Heart left ventricle (tissue), 16 donors: ENCODE measurements at regions of chr10 and their contacts with region 1.

Region 1: DNA sequence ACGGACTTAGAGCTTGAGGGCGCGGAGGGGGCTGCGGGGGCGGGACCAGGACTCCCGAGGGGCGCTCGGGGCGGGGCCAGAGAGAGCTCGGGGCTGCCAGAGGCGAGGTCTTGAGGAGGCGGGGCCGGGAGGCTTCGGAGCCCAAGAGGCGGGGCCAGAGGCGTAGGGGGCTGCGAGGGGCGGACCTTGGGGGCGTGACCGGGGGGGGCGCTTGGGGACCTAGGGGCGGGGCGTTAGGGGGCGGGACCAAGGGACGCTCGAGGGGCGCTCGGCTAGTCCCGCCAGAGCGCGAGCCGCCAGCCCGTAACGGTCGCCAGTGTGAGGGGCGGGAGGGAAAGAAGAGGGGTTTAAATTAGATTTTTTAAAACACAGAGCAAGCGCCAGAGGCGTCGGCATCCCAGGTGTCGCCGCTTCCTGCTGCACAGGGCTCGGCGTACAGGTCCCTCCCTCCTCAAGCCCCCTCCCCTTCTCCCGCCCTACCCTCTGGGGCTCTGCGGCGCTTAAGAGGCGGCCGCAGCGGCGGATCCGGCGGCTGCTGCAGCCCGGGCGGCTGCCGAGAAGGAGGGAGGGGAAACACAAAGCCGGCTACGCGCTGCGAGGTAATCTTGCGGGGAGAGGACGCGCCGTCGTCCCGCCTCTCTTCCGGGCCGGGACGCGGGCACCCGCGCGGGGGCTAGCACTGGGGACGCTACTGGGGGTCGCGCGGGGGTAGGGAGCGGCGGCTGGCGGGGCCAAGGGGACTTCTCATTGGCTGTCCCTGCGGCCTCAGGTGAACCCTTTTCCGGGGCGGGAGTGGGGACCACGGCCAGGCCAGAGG is at the start of gene ADD3:
- DNase-seq: peak; percentile 96 to 99 (median 98)
- ATAC-seq: peak; percentile 91 to 94 (median 92)
- H3K4me3 ChIP-seq: peak within 1 kb of the TSS; percentile 72 to 98 (median 94)
- H3K27ac ChIP-seq: peak within 1 kb of the TSS; percentile 83 to 99 (median 97)
- H3K4me1 ChIP-seq: peaks cover 0 to 72% (median 43%) of the 10 kb centered on the region in 12 donors
- H3K27me3 ChIP-seq: no peaks in the 10 kb centered on the region
- CTCF ChIP-seq: no peak
- POLR2A ChIP-seq: peak in 1 of 2 donors; percentile 79
- total RNA-seq, gene ADD3: 47.9 to 659 (median 103) TPM

Region 2: GRCh38 chr10:109861081-109861480 is 146.8 kb before region 1 on chr10:
- intact Hi-C with region 1: no loop called
- DNase-seq: no peak
- ATAC-seq: no peak
- H3K4me3 ChIP-seq: no peak overlapping the region
- H3K27ac ChIP-seq: no peak overlapping the region
- H3K4me1 ChIP-seq: peaks cover 0 to under 1% (median 0%) of the 10 kb centered on the region in 12 donors
- H3K27me3 ChIP-seq: no peaks in the 10 kb centered on the region
- CTCF ChIP-seq: no peak
- POLR2A ChIP-seq: no peak

Region 3: GRCh38 chr10:109883859-109884771 is 123.8 kb before region 1 on chr10:
- intact Hi-C with region 1: loop called in 4 of 10 experiments (anchors 2 to 10 kb)
- DNase-seq: peak; percentile 68 to 76 (median 72)
- ATAC-seq: peak; percentile 77 to 82 (median 80)
- H3K4me3 ChIP-seq: peak overlapping the region in 6 of 12 donors; percentile 14 to 40 (median 26)
- H3K27ac ChIP-seq: peak overlapping the region in 11 of 12 donors; percentile 11 to 71 (median 49)
- H3K4me1 ChIP-seq: peaks cover 0 to 35% (median 15%) of the 10 kb centered on the region in 12 donors
- H3K27me3 ChIP-seq: no peaks in the 10 kb centered on the region
- CTCF ChIP-seq: peak; percentile 90 to 98 (median 96)
- POLR2A ChIP-seq: no peak

Region 4: DNA sequence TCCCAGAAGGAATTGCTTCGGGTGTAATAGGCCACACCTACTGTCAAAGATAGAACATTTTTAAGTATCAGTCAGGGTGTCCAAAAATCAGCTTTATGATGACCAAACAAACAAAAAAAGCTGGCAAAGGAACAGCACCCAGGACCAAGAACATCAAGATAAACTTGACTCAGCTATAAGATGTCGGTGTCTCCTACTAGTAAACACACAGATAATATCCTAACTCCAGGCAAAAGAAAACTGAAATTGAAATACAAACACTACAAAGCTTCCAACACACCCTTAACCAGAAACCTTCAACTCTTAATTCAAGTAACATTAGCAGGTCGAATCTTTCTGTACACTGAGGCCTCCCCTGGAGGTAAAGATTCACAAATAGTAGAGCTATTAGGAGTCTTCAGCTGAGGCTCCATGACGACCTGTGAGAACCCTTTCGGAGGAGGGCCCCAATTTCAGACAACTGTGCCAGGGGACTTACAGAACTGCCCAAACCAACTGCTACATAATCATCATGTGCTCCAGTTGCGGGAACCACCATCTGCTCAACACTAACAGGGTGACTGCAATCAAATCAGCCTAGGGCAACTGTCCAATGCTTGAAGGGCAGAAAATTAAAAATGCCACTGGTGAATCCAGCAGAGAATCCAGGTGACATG is 104.8 kb before region 1 on chr10:
- intact Hi-C with region 1: loop called in 3 of 10 experiments (anchors 5 to 10 kb)
- DNase-seq: no peak
- ATAC-seq: peak; percentile 7 to 36 (median 18)
- H3K4me3 ChIP-seq: peak overlapping the region in 2 of 12 donors; percentile 2 to 18
- H3K27ac ChIP-seq: peak overlapping the region; percentile 35 to 83 (median 64)
- H3K4me1 ChIP-seq: peaks cover 11 to 72% (median 46%) of the 10 kb centered on the region in 12 donors
- H3K27me3 ChIP-seq: no peaks in the 10 kb centered on the region
- CTCF ChIP-seq: no peak
- POLR2A ChIP-seq: no peak

Region 5: DNA sequence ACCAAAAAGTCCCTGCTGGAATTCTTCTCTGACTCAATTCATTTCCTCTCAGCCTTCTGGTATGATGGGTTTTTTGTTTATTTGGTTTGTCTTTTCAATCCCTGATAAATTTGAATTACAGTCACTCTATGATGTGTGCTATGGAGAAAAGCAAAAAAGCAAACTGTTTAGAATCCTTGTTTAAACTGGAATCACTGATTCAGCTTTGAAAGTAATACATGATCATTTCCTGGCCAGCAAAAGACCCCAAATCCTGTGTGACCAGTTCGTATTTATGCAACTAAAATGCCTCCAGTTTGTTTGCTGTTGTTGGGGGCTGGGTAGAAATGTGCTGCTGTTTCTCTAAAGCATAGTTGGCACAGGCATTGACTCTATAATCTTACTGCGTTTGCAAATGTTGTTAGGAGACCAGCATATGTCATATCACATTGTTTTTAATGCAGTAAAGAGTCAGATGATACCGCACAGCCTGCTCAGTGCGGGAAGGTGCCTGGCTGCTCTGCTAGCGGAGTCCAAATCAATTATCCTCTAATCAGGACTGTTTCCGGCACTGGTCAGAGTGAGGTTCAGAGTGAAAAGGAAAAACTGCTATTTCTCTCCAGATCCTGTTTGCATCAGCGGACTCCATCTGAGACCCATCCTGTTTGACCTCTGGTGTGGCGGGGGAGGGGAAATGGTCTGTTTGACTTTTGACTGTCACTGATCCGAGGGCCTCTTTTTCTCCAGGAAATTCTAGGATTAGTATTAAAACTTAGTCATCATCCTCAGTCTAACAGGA is 40.8 kb before region 1 on chr10:
- intact Hi-C with region 1: loop called in 1 of 10 experiments (anchors 5 kb)
- DNase-seq: peak in 4 of 5 donors; percentile 35 to 62 (median 48)
- ATAC-seq: peak in 3 of 4 donors; percentile 24 to 51 (median 31)
- H3K4me3 ChIP-seq: no peak overlapping the region
- H3K27ac ChIP-seq: peak overlapping the region in 9 of 12 donors; percentile 25 to 70 (median 57)
- H3K4me1 ChIP-seq: peaks cover 0 to 57% (median 34%) of the 10 kb centered on the region in 12 donors
- H3K27me3 ChIP-seq: no peaks in the 10 kb centered on the region
- CTCF ChIP-seq: no peak
- POLR2A ChIP-seq: no peak

Region 6: GRCh38 chr10:110110338-110110737 is 102.4 kb after region 1 on chr10:
- intact Hi-C with region 1: loop called in 4 of 10 experiments (anchors 5 kb)
- DNase-seq: no peak
- ATAC-seq: no peak
- H3K4me3 ChIP-seq: no peak overlapping the region
- H3K27ac ChIP-seq: no peak overlapping the region
- H3K4me1 ChIP-seq: peaks cover 0 to 14% (median 2%) of the 10 kb centered on the region in 12 donors
- H3K27me3 ChIP-seq: no peaks in the 10 kb centered on the region
- CTCF ChIP-seq: no peak
- POLR2A ChIP-seq: no peak

Region 7: DNA sequence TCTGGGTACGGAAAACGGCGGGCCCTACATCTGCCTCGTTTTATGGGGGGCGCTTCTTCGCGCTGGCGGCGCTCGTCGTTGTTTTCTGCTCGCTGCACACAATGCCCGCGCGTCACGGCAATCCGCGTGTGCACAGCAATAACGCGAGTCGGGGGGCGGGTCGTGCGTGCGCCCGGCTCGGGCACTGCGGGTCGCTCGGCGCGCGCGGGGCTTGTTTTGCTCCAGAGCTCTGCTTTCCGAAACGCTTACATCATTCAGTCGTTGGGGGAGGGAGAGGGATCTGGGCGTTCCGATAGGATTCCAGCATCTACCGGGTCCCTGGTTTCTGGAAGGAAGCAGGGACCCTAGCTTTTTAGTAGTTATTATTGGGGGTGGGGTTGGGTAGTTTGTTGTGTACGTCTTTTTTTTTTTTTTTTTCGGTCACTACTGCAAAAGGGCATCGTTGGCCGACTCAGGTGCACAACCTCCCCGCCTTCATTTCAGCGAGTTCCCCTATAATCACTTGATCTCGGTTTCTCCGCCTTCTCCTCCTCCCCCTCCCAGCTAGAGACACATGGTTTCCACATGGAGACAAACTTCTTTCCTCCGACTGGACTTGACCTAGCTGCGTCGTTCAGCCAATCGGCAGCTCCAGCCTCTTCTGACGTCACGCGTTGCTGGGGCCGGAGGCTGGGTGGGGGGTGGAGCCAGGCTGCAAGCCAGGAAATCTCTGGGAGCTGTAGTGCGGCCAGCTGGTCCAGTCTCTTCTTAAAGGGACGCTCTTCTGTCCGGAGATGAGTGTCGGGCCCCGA is 203.0 kb after region 1 on chr10:
- intact Hi-C with region 1: loop called in 1 of 10 experiments (anchors 10 kb)
- DNase-seq: peak; percentile 97 to 98 (median 97)
- ATAC-seq: peak; percentile 90 to 92 (median 91)
- H3K4me3 ChIP-seq: peak overlapping the region; percentile 61 to 92 (median 83)
- H3K27ac ChIP-seq: peak overlapping the region; percentile 94 to 99 (median 98)
- H3K4me1 ChIP-seq: peaks cover 11 to 51% (median 34%) of the 10 kb centered on the region in 12 donors
- H3K27me3 ChIP-seq: no peaks in the 10 kb centered on the region
- CTCF ChIP-seq: no peak
- POLR2A ChIP-seq: peak in 1 of 2 donors; percentile 76

Region 8: DNA sequence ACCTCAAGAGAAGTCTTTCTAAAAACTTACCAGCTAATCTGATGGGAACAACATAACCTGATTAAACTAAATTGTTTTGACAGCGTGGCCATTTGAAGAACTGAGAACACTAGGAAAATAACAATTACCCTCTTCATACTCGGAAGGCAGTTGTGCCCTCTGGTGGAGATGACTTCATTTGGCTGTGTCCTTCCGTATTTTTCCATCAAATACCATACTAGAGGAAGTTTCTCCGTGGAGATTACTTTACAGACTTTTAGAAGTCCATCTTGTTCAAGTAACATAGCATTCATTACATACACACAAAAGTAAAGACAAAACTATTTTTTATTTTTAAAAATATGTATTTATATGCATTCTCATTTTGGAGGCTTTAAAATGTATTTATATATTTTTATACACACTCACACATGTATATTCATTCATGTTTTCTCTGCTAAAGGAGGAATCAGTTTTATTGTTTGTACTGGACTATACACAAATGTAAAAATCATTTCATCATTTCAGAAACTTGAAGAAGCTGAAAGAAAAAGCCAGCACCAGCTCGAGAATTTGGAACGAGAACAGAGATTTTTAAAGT is 271.6 kb after region 1 on chr10:
- intact Hi-C with region 1: loop called in 1 of 10 experiments (anchors 10 kb)
- DNase-seq: peak in 4 of 5 donors; percentile 34 to 57 (median 50)
- ATAC-seq: peak; percentile 39 to 75 (median 69)
- H3K4me3 ChIP-seq: peak overlapping the region in 1 of 12 donors; percentile 27
- H3K27ac ChIP-seq: peak overlapping the region in 8 of 12 donors; percentile 2 to 46 (median 26)
- H3K4me1 ChIP-seq: peaks cover 0 to 64% (median 35%) of the 10 kb centered on the region in 12 donors
- H3K27me3 ChIP-seq: no peaks in the 10 kb centered on the region
- CTCF ChIP-seq: peak; percentile 62 to 90 (median 81)
- POLR2A ChIP-seq: no peak